ENCODE measurements at regions of chr15 and their contacts with region 1.

Region 1: DNA sequence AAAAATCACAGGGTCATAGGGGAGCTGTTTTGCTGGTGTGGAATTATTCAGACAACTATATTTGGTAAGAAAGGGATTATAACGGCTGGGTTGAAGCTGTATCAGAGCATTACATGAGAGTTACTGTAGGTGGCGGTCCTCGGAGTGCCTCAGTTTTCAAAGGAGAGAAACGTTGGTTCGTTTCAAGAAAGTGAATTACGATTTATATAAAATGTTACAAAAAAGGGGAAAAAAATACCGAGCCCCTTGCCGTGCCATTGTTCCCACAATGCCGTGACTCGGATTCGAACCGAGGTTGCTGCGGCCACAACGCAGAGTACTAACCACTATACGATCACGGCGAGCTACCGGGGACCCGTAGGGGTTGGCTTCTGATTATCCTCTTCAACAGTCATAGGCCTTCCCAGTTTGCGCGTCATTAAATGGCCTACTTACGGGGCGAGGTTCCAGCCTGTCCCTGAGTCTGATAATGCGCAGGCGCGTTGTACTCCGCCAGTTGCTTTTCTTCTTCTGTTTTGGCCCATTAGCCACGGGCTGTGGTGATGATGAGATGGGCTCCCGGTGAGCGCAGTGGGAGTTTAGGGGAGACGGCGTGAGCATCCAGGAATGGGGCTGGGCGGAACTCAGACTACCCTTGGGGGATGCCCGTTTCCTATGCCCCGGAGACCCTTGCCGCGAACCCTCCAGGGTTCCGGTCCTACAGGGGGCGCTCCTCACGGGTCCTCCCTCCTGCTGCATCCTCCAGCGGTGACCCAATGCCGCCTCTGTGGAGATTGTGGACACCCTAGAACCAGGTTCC is 10.8 kb upstream of the SHF start:
- DNase-seq: peak; percentile 86 to 98
- ATAC-seq: peak; percentile 79 to 89 (median 84)
- H3K4me3 ChIP-seq: peak overlapping the region; percentile 30 to 80 (median 72)
- H3K27ac ChIP-seq: peak overlapping the region; percentile 85 to 99 (median 96)
- H3K4me1 ChIP-seq: peaks cover 0 to 45% (median 9%) of the 10 kb centered on the region in 9 donors
- H3K27me3 ChIP-seq: no peaks in the 10 kb centered on the region
- CTCF ChIP-seq: peak; percentile 39 to 90 (median 70)

Region 2: DNA sequence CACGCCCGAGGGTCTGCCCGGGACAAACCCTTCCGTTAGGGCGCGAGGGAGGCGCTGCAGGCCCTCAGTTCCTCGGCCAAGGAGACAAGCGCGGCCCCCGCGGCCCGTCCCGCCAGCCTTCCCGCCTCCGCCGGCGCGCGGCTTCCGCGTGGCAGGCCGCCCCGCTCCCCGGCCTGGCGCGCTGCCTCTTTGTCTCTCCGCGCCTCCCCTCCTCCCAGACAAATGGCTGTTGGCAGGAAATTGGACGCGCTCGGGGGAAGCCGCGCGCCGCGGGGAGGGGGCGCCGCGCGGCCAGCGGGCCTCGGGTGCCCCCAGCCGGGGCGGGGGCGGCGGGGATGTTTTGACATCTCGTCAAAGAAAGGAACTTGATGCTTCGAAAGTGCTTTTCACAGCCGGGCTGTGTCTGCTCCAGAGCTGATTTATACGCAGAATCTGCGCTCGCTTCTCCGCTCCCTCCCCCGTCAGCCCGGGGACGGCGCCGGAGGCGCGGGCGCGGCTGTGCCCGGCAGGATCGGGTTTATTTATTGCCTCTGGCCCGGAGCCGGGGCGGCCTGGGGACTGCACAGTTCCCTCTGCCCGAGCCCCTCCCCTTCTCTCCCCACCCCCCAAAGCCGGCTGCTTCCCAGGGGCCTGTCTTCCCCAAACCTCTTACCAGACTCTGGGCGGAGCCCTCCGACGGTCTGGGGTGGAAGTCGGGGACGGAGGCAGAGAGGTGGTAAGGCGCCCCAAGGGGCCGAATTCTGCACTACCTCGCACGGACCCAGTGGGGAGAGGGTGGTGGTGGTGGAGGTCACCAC is 31.5 kb before region 1 on chr15:
- intact Hi-C with region 1: loop called in 7 of 10 experiments (anchors 1 to 5 kb)
- DNase-seq: peak; percentile 86 to 89
- ATAC-seq: peak; percentile 81 to 90 (median 86)
- H3K4me3 ChIP-seq: peak overlapping the region; percentile 42 to 92 (median 78)
- H3K27ac ChIP-seq: peak overlapping the region; percentile 97 to 100 (median 99)
- H3K4me1 ChIP-seq: peaks cover 0 to 42% (median 19%) of the 10 kb centered on the region in 9 donors
- H3K27me3 ChIP-seq: no peaks in the 10 kb centered on the region
- CTCF ChIP-seq: peak in 8 of 9 donors; percentile 53 to 72 (median 64)

Region 3: DNA sequence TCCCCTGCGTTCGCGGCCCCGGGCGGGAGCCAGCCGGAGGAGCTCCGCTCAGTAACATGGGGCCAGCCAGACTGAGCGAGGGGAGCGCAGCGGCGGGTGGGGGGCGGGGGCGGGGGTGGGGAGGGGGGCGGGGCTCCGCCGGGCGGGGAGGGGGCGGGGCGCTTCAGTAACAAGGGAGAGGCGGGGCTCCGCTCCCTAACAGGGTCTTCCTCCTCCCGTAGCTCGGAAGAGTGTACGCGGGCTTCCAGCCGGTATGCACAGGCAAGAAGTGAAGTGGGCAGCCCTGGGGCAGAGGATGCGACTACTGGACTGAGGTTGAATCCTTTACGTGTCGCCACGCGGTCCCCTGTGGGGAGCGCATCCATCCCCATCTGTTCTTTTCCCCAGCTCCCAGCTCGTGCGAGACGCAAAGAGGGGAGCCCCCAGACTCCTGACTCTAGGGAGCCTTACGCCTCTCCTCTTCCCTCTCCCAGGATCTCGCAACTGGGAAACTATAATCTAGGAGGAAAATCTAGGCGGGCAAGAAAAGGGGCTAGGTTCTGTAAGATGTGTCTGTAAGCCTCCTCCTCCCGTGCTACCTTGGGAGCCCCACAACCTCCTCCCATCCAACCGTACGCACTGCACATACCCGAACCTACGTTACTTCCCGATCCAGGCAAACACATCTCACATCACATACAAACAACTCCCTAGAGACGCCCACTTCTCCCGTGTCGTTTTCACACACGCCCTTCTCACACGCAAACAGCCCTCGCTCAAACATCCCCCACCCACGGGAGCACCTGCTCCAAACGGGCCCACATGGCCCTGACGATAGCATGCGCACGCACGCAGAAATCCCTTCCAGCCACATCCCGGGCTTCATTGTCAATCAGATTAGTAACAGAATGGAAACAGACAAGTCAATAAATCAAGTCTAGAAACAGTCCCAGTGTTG is 10.4 kb before region 1 on chr15 and contains the start of gene SHF:
- intact Hi-C with region 1: loop called in 1 of 10 experiments (anchors 1 kb)
- DNase-seq: peak; percentile 64
- ATAC-seq: peak; percentile 62 to 86 (median 81)
- H3K4me3 ChIP-seq: peak within 1 kb of the TSS; percentile 54 to 90 (median 72)
- H3K27ac ChIP-seq: peak within 1 kb of the TSS; percentile 53 to 81 (median 70)
- H3K4me1 ChIP-seq: peaks cover 0 to 33% (median 22%) of the 10 kb centered on the region in 9 donors
- H3K27me3 ChIP-seq: peaks cover 0 to 24% (median 0%) of the 10 kb centered on the region in 7 donors
- CTCF ChIP-seq: no peak
- total RNA-seq, gene SHF: 3.6 to 8.4 (median 5.6) TPM

Region 4: GRCh38 chr15:45236816-45237516 is 38.4 kb after region 1 on chr15:
- intact Hi-C with region 1: no loop called
- DNase-seq: no peak
- ATAC-seq: no peak
- H3K4me3 ChIP-seq: no peak overlapping the region
- H3K27ac ChIP-seq: no peak overlapping the region
- H3K4me1 ChIP-seq: peaks cover 0 to 4% (median 0%) of the 10 kb centered on the region in 9 donors
- H3K27me3 ChIP-seq: no peaks in the 10 kb centered on the region
- CTCF ChIP-seq: no peak